ENCODE measurements at regions of chr1 and their contacts with region 1.

Region 1: DNA sequence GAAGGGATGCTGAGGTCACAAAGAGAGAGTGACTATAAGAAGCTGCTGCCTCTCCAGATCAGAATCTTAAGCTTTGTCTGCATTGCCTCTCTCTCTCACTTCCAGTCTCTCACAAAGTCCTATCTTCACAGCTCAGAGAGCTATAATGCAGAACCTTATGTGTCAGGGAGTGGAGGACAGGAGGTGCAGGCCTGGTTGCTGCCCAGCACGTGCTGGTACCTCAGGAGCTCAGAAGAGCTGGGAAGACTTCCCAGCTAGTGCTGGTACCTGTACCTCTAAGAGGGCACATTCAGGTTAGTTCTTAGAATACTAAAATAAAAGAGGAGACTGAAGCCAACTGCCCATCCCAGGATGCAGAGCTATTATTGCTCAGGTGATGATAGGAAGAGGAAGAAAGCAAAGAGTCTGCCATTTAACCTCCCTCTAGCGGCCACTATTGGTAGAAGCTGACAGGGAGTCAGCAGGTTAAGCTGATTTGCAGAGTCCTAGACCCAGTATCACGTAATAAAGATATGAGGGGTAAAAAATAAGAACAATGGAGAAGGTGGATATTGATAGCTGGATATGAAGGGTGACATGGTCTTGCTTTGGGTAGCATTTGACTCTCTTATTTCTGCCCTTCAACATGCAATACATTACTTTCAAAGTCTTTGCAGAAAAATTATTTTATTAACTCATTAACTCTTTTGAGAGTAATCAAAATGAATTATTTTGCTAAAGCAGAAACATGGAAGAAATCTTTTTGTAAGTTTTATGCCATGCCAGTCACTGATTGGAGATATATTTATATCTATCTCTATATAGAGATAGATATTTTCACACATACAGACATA is 138.1 kb upstream of the HMCN1 start:
- DNase-seq: peak; percentile 54
- CTCF ChIP-seq: peak; percentile 69

Region 2: GRCh38 chr1:185559684-185560331 is 36.2 kb before region 1 on chr1:
- CTCF ChIA-PET with region 1: interaction called, 24 read pairs
- POLR2A ChIA-PET with region 1: no interaction called
- DNase-seq: peak; percentile 66
- CTCF ChIP-seq: peak; percentile 46

Region 3: GRCh38 chr1:185581961-185582725 is 13.9 kb before region 1 on chr1:
- CTCF ChIA-PET with region 1: interaction called, 38 read pairs
- POLR2A ChIA-PET with region 1: no interaction called
- DNase-seq: no peak
- CTCF ChIP-seq: no peak

Region 4: DNA sequence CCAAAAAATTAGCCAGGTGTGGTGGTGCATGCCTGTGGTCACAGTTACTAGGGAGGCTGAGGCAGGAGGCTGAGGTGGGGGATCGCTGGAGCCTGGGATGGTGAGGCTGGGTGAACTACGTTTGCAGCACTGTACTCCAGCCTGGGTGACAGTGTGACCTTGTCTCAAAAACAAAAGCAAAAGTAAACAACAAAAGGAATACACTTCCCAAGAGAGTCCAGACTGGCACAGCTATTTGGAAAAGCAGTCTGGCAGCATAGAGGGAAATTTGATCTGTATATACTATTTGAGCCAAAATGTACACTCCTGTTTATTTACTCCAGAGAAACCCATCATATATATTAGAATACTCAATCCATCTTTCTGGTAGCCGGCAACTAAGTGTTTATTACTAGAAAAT is 31.1 kb after region 1 on chr1:
- CTCF ChIA-PET with region 1: interaction called, 14 read pairs
- POLR2A ChIA-PET with region 1: no interaction called
- DNase-seq: no peak
- CTCF ChIP-seq: no peak

Region 5: GRCh38 chr1:185853739-185854138 is 257.7 kb after region 1 on chr1:
- CTCF ChIA-PET with region 1: no interaction called
- POLR2A ChIA-PET with region 1: no interaction called
- DNase-seq: no peak
- CTCF ChIP-seq: no peak

Measured in GM10248 (cell line).